ENCODE measurements at regions of chr2 and their contacts with region 1.

Region 1: DNA sequence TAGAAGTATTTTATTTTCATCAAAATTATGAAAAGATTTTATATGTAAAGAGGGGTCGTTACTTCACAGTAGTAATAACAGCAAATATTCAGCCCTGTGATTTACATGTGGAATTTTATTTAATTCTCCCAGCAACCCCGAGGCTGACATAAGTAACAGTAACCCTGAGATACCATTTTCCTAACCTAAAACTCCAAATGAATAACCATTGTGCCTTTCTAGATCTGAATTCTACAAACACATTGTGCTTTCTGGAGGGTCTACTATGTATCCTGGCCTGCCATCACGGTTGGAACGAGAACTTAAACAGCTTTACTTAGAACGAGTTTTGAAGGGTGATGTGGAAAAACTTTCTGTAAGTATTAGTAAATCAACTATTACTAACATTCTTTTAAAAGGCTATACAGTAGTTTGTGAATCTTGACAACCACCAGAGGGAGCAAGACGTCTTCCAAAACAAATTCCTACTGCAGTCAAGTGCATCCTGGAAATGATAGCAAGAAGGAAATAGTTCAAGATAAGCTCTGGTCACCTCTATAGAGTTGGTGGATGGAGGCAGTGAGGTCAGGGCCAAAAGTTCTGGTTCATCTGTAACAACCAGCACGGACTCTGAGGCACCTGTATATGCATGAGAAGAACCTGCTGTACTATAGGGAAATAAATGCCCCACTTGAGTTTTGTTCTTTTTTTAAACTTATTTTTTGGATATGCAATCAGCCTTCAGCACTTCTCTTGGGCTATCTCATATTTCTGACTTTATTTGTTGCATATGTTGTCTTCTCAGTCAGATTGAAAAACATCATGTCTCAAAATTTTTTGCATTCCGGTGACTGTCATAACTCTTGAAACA is 37.4 kb downstream of the ACTR2 start:
- DNase-seq: no peak
- H3K4me3 ChIP-seq: no peak overlapping the region
- H3K27ac ChIP-seq: no peak overlapping the region
- H3K4me1 ChIP-seq: no peaks in the 10 kb centered on the region
- H3K27me3 ChIP-seq: no peaks in the 10 kb centered on the region
- CTCF ChIP-seq: peak; percentile 54 to 69 (median 57)

Region 2: GRCh38 chr2:65227425-65228262 is 37.4 kb before region 1 on chr2 and contains the start of gene ACTR2:
- intact Hi-C with region 1: no loop called
- DNase-seq: peak; percentile 86 to 98
- H3K4me3 ChIP-seq: peak within 1 kb of the TSS; percentile 66 to 100
- H3K27ac ChIP-seq: peak within 1 kb of the TSS; percentile 89 to 100
- H3K4me1 ChIP-seq: peaks cover 3 to 36% of the 10 kb centered on the region in 2 donors
- H3K27me3 ChIP-seq: no peaks in the 10 kb centered on the region
- CTCF ChIP-seq: no peak
- total RNA-seq, gene ACTR2: 78.0 TPM

Region 3: GRCh38 chr2:65553504-65554074 is 288.5 kb after region 1 on chr2:
- intact Hi-C with region 1: loop called (anchors 1 kb)
- DNase-seq: no peak
- H3K4me3 ChIP-seq: peak overlapping the region; percentile 29 to 56
- H3K27ac ChIP-seq: no peak overlapping the region
- H3K4me1 ChIP-seq: peaks cover 0 to 4% of the 10 kb centered on the region in 2 donors
- H3K27me3 ChIP-seq: no peaks in the 10 kb centered on the region
- CTCF ChIP-seq: no peak

Measured in ascending aorta (tissue), 2 donors.